ENCODE measurements at regions of chr5 and their contacts with region 1.

Region 1: GRCh38 chr5:90308787-90309553 is 100.6 kb downstream of the CETN3 start:
- DNase-seq: peak in 1 of 2 experiments; percentile 52
- H3K4me3 ChIP-seq: no peak overlapping the region
- H3K4me3 Mint-ChIP-seq: no peak overlapping the region
- H3K27ac Mint-ChIP-seq: peak overlapping the region; percentile 59
- H3K4me1 ChIP-seq: peaks cover 18% of the 10 kb centered on the region
- H3K4me1 Mint-ChIP-seq: peaks cover 25% of the 10 kb centered on the region
- H3K27me3 ChIP-seq: no peaks in the 10 kb centered on the region
- H3K27me3 Mint-ChIP-seq: no peaks in the 10 kb centered on the region
- CTCF ChIP-seq: no peak

Region 2: GRCh38 chr5:89930591-89931392 is 378.2 kb before region 1 on chr5:
- CTCF ChIA-PET with region 1: no interaction called
- POLR2A ChIA-PET with region 1: no interaction called
- intact Hi-C with region 1: loop called (anchors 5 kb)
- DNase-seq: peak in 1 of 2 experiments; percentile 11
- H3K4me3 ChIP-seq: no peak overlapping the region
- H3K4me3 Mint-ChIP-seq: peak overlapping the region; percentile 52
- H3K27ac Mint-ChIP-seq: peak overlapping the region; percentile 58
- H3K4me1 ChIP-seq: peaks cover 24% of the 10 kb centered on the region
- H3K4me1 Mint-ChIP-seq: peaks cover 19% of the 10 kb centered on the region
- H3K27me3 ChIP-seq: no peaks in the 10 kb centered on the region
- H3K27me3 Mint-ChIP-seq: no peaks in the 10 kb centered on the region
- CTCF ChIP-seq: no peak

Region 3: DNA sequence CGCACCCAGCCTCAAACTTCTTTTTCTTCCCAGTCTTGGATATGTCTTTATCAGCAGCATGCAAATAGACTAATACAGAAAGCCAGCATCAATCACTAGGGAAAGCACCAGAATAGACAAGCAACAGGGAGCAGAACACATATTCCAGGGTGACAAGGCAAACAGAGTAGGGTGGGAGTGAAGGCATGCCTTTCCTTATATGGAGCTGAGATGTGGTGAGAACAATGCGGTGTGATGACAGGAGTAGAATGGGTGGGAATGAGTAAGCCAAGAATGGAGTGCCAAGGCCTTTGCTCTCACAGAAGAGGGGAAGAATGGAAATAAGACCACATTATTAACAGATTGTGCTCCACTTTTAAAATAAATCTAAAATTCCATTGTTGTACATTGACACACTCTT is 15.0 kb before region 1 on chr5:
- CTCF ChIA-PET with region 1: no interaction called
- POLR2A ChIA-PET with region 1: no interaction called
- intact Hi-C with region 1: loop called (anchors 2 kb)
- DNase-seq: peak; percentile 21 to 36
- H3K4me3 ChIP-seq: no peak overlapping the region
- H3K4me3 Mint-ChIP-seq: no peak overlapping the region
- H3K27ac Mint-ChIP-seq: no peak overlapping the region
- H3K4me1 ChIP-seq: peaks cover 16% of the 10 kb centered on the region
- H3K4me1 Mint-ChIP-seq: peaks cover 12% of the 10 kb centered on the region
- H3K27me3 ChIP-seq: no peaks in the 10 kb centered on the region
- H3K27me3 Mint-ChIP-seq: no peaks in the 10 kb centered on the region
- CTCF ChIP-seq: no peak

Region 4: GRCh38 chr5:90386099-90386710 is 77.2 kb after region 1 on chr5:
- CTCF ChIA-PET with region 1: no interaction called
- POLR2A ChIA-PET with region 1: no interaction called
- intact Hi-C with region 1: loop called (anchors 1 kb)
- DNase-seq: peak in 1 of 2 experiments; percentile 15
- H3K4me3 ChIP-seq: no peak overlapping the region
- H3K4me3 Mint-ChIP-seq: no peak overlapping the region
- H3K27ac Mint-ChIP-seq: no peak overlapping the region
- H3K4me1 ChIP-seq: no peaks in the 10 kb centered on the region
- H3K4me1 Mint-ChIP-seq: peaks cover 6% of the 10 kb centered on the region
- H3K27me3 ChIP-seq: no peaks in the 10 kb centered on the region
- H3K27me3 Mint-ChIP-seq: no peaks in the 10 kb centered on the region
- CTCF ChIP-seq: peak; percentile 51 to 61

Region 5: GRCh38 chr5:90741022-90741563 is 432.1 kb after region 1 on chr5:
- CTCF ChIA-PET with region 1: no interaction called
- POLR2A ChIA-PET with region 1: no interaction called
- intact Hi-C with region 1: loop called (anchors 1 kb)
- DNase-seq: peak; percentile 47 to 57
- H3K4me3 ChIP-seq: no peak overlapping the region
- H3K4me3 Mint-ChIP-seq: peak overlapping the region; percentile 8
- H3K27ac Mint-ChIP-seq: peak overlapping the region; percentile 20
- H3K4me1 ChIP-seq: no peaks in the 10 kb centered on the region
- H3K4me1 Mint-ChIP-seq: peaks cover 8% of the 10 kb centered on the region
- H3K27me3 ChIP-seq: no peaks in the 10 kb centered on the region
- H3K27me3 Mint-ChIP-seq: peaks cover 5% of the 10 kb centered on the region
- CTCF ChIP-seq: no peak